H1 (cell line): ENCODE measurements at regions of chr11 and their contacts with region 1.

Region 1: GRCh38 chr11:8318336-8318935 is 54.8 kb upstream of the LMO1 start:
- DNase-seq: peak in 1 of 2 experiments; percentile 81
- H3K4me3 ChIP-seq: no peak overlapping the region
- H3K27ac ChIP-seq: no peak overlapping the region
- H3K4me1 ChIP-seq: no peaks in the 10 kb centered on the region
- H3K27me3 ChIP-seq: peaks cover 0 to 3% (median 0%) of the 10 kb centered on the region in 4 experiments; a peak in 2 of 7 replicates
- CTCF ChIP-seq: peak; percentile 90 to 92 (median 92)
- EP300 ChIP-seq: no peak
- POLR2A ChIP-seq: no peak
- RAD21 ChIP-seq: peak; percentile 90

Region 2: DNA sequence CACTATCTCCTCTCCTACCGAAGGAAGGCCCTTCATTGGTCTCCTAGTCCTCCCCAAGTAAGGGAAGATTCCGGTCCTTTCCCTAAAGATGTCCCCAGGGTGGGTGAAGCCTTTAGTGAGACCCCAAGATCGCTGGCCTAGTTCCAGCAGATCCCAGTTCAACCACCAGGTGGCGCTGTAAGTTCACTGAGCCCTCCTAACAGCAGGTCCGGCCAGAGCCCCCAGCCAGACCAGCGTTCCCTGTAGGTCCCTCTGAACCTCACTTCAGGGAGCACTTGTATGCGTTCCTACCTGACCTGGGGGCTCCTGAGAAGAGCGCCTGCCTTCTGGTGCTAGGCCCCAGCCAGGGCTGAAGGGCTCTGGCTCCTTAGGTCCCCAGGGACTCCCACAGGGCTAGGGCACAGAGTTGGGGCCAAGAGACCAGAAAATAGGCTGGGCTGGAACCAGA is 92.8 kb before region 1 on chr11:
- CTCF ChIA-PET with region 1: interaction called, 110 read pairs
- POLR2A ChIA-PET with region 1: no interaction called
- DNase-seq: peak; percentile 86 to 98
- H3K4me3 ChIP-seq: no peak overlapping the region
- H3K27ac ChIP-seq: no peak overlapping the region
- H3K4me1 ChIP-seq: peaks cover 0 to 14% (median 3%) of the 10 kb centered on the region in 4 experiments; a peak in 4 of 7 replicates
- H3K27me3 ChIP-seq: no peaks in the 10 kb centered on the region; a peak in 1 of 7 replicates
- CTCF ChIP-seq: peak; percentile 90 to 98 (median 97)
- EP300 ChIP-seq: no peak
- POLR2A ChIP-seq: no peak
- RAD21 ChIP-seq: peak; percentile 98 to 99

Region 3: DNA sequence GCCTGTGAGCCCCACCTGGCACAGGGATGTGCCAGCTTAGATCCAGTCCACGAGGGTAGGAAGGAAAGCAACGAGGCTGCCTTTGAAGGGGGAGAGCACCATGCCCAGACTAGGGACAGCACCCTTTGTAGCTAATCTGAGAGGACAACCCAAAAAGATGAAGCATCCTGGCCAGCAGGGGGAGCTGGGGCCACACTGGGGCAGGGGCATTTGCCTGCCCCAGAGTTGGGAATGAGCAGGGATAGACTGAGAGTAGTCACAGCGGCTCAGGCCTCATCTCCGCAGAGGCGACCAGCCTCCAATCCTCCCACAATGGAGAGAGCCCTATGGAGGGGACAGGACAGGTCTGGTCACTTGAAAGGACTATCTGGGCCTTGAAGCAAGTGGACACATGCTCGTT is 71.1 kb before region 1 on chr11:
- CTCF ChIA-PET with region 1: interaction called, 19 read pairs
- POLR2A ChIA-PET with region 1: no interaction called
- DNase-seq: peak in 1 of 2 experiments; percentile 75
- H3K4me3 ChIP-seq: no peak overlapping the region
- H3K27ac ChIP-seq: no peak overlapping the region
- H3K4me1 ChIP-seq: peaks cover 7 to 16% (median 11%) of the 10 kb centered on the region in 4 experiments; a peak in 6 of 7 replicates
- H3K27me3 ChIP-seq: peaks cover 0 to 1% (median 0%) of the 10 kb centered on the region in 4 experiments; a peak in 1 of 7 replicates
- CTCF ChIP-seq: peak; percentile 65 to 77 (median 71)
- EP300 ChIP-seq: no peak
- POLR2A ChIP-seq: no peak
- RAD21 ChIP-seq: peak; percentile 64 to 68

Region 4: DNA sequence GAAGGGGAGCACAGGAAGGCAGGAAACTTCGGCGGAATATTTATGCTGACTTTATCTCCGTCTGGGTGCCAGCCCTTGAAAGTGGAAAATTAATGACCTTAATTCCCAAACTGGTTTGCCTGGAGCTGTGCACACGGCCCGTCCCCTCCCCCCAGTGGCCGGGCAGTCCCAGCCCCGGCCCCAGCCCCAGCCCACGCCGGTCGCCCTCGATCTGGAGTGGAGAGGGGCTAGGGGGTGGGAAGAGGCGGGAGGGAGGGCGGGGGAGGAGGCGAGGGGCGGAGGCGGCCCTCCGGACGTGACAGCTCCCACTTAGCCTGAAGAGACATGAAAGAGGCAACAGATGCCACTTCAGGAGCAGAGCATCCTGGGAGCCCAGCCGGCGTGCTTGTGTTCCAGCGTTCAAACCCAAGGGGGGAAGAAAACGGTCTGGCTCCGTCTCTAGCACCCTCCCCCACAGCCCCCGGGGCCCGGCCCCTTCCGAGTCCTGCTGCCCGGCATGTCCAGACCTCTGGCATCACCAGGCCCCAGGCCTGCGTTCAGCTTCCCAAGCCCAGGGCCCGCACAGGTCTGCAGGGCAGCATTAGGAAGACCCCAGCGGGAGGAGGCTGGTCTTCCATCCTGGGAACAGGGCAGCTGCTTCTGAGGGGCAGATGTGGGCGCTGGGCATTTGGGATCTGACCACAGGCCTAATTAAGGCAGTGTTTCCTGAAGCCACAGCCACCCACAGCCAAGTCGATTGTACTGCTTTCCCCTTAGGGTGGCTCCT is 34.8 kb before region 1 on chr11:
- CTCF ChIA-PET with region 1: interaction called, 24 read pairs
- POLR2A ChIA-PET with region 1: no interaction called
- DNase-seq: peak in 1 of 2 experiments; percentile 74
- H3K4me3 ChIP-seq: peak overlapping the region; percentile 6 to 64 (median 40)
- H3K27ac ChIP-seq: no peak overlapping the region
- H3K4me1 ChIP-seq: peaks cover 0 to 11% (median 8%) of the 10 kb centered on the region in 4 experiments; a peak in 6 of 7 replicates
- H3K27me3 ChIP-seq: peaks cover 0 to 10% (median 0%) of the 10 kb centered on the region in 4 experiments; a peak in 4 of 7 replicates
- CTCF ChIP-seq: no peak
- EP300 ChIP-seq: no peak
- POLR2A ChIP-seq: no peak
- RAD21 ChIP-seq: no peak

Region 5: GRCh38 chr11:8298801-8299786 is 19.3 kb before region 1 on chr11:
- CTCF ChIA-PET with region 1: interaction called, 25 read pairs
- POLR2A ChIA-PET with region 1: no interaction called
- DNase-seq: no peak
- H3K4me3 ChIP-seq: no peak overlapping the region
- H3K27ac ChIP-seq: no peak overlapping the region
- H3K4me1 ChIP-seq: no peaks in the 10 kb centered on the region
- H3K27me3 ChIP-seq: no peaks in the 10 kb centered on the region; a peak in 1 of 7 replicates
- CTCF ChIP-seq: no peak
- EP300 ChIP-seq: no peak
- POLR2A ChIP-seq: no peak
- RAD21 ChIP-seq: no peak

Region 6: DNA sequence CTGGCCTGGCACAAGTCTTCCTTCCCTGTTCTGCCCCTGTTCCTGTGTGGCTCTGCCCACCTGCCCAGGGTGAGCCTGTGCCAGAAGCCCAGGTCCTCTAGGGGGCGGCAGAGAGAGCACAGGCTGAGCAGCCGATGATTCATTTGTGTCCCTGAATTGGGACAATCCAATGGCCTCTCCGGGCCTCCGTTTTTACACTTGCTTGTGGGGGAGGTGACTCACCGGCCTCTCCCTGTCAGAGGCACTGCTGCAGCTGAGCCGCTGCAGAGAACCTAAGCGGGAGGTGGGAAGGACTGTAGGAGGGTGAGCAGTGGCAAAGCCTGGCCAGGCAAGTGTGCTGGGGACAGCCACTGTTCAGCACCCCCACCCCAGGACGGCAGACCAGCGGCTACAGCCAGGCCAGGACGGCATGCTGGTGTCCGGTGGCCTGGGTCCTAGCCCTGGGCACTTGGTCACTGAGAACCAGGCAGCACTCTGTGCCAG is 10.5 kb after region 1 on chr11:
- CTCF ChIA-PET with region 1: interaction called, 62 read pairs
- POLR2A ChIA-PET with region 1: no interaction called
- DNase-seq: peak; percentile 72 to 95
- H3K4me3 ChIP-seq: peak overlapping the region in 1 of 4 experiments; percentile 36; a peak in 1 of 8 replicates
- H3K27ac ChIP-seq: no peak overlapping the region
- H3K4me1 ChIP-seq: peaks cover 5 to 25% (median 12%) of the 10 kb centered on the region in 4 experiments
- H3K27me3 ChIP-seq: no peaks in the 10 kb centered on the region; a peak in 1 of 7 replicates
- CTCF ChIP-seq: peak; percentile 80 to 92 (median 90)
- EP300 ChIP-seq: peak in 1 of 2 experiments; percentile 51; a peak in 1 of 3 replicates
- POLR2A ChIP-seq: no peak
- RAD21 ChIP-seq: peak; percentile 55 to 68

Region 7: DNA sequence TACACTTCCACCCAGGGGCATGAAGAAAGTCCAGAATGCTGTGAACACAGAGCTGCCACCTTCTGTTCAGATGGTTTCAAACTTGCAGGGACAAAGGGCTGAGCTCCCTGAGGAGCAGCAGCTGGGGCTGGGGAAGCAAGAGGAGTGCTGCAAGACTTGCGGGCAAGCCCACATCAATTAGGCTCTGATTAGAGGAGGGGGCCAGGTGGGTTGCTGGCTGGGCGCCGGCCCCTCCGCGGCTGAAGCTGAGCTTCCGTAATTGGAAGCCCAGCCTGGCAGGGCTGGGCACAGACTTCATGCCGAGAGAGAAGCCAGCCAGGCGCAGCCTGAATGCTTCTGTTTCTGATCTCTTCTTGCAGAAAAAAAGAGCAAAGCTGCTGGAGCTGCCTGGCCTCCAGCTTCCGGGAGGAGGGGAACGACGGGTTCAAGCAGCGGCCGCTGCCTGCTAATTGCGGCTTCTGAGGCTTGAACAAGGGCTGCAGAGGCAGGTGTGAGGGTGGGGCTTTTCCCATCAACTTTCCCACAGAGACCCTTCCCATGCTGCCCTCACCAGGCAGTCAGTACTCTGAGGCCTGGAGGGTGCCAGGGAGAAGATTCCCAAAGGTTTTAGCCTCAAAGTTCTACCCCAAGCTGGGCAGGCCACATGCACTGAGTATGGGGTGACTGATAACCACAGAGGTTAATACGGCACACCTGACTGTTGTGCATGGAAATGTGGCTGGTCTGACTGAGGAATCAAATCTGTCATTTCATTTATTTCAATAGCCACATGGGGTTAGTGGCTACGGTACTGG is 36.4 kb after region 1 on chr11:
- CTCF ChIA-PET with region 1: interaction called, 10 read pairs
- POLR2A ChIA-PET with region 1: no interaction called
- DNase-seq: no peak
- H3K4me3 ChIP-seq: no peak overlapping the region
- H3K27ac ChIP-seq: no peak overlapping the region
- H3K4me1 ChIP-seq: no peaks in the 10 kb centered on the region; a peak in 2 of 7 replicates
- H3K27me3 ChIP-seq: no peaks in the 10 kb centered on the region; a peak in 2 of 7 replicates
- CTCF ChIP-seq: no peak
- EP300 ChIP-seq: no peak
- POLR2A ChIP-seq: no peak
- RAD21 ChIP-seq: no peak

Region 8: GRCh38 chr11:8426076-8426475 is 107.6 kb after region 1 on chr11:
- CTCF ChIA-PET with region 1: no interaction called
- POLR2A ChIA-PET with region 1: no interaction called
- DNase-seq: no peak
- H3K4me3 ChIP-seq: no peak overlapping the region
- H3K27ac ChIP-seq: no peak overlapping the region
- H3K4me1 ChIP-seq: no peaks in the 10 kb centered on the region
- H3K27me3 ChIP-seq: no peaks in the 10 kb centered on the region
- CTCF ChIP-seq: no peak
- EP300 ChIP-seq: no peak
- POLR2A ChIP-seq: no peak
- RAD21 ChIP-seq: no peak

Region 9: GRCh38 chr11:8477680-8478079 is 159.2 kb after region 1 on chr11:
- CTCF ChIA-PET with region 1: no interaction called
- POLR2A ChIA-PET with region 1: no interaction called
- DNase-seq: no peak
- H3K4me3 ChIP-seq: no peak overlapping the region
- H3K27ac ChIP-seq: no peak overlapping the region
- H3K4me1 ChIP-seq: no peaks in the 10 kb centered on the region
- H3K27me3 ChIP-seq: no peaks in the 10 kb centered on the region
- CTCF ChIP-seq: no peak
- EP300 ChIP-seq: no peak
- POLR2A ChIP-seq: no peak
- RAD21 ChIP-seq: no peak